Heart left ventricle (tissue), 16 donors: ENCODE measurements at regions of chr15 and their contacts with region 1.

Region 1: GRCh38 chr15:84685304-84685703 is 27.3 kb upstream of the NMB start:
- DNase-seq: peak in 3 of 5 donors; percentile 10 to 70 (median 68)
- ATAC-seq: peak in 3 of 4 donors; percentile 42 to 97 (median 87)
- H3K4me3 ChIP-seq: no peak overlapping the region
- H3K27ac ChIP-seq: peak overlapping the region in 3 of 12 donors; percentile 6 to 47 (median 17)
- H3K4me1 ChIP-seq: peaks cover 0 to 8% (median 0%) of the 10 kb centered on the region in 12 donors
- H3K27me3 ChIP-seq: no peaks in the 10 kb centered on the region
- CTCF ChIP-seq: no peak
- POLR2A ChIP-seq: no peak

Region 2: DNA sequence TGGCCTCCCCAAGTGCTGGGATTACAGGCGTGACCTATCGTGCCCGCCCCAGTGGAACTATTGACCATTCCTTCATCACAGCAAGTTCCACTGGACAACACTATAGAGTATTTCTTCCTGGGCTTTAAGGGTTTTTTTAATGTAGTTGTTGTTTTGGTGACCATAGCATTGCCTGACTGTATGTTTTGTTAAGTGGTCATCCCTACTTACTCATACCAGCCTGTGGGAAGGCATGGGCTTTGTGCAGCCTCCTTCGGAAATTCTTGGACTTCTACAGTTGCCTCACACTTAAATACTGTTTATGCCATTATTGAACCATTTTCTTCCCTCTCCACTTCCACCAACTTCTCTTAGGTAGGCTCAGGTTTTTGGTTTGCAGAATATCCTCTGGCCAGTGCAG is 111.9 kb after region 1 on chr15:
- intact Hi-C with region 1: loop called in 1 of 10 experiments (anchors 10 kb)
- DNase-seq: no peak
- ATAC-seq: no peak
- H3K4me3 ChIP-seq: no peak overlapping the region
- H3K27ac ChIP-seq: no peak overlapping the region
- H3K4me1 ChIP-seq: peaks cover 0 to 8% (median 0%) of the 10 kb centered on the region in 12 donors
- H3K27me3 ChIP-seq: no peaks in the 10 kb centered on the region
- CTCF ChIP-seq: no peak
- POLR2A ChIP-seq: no peak